PC-9 (cell line): ENCODE measurements at regions of chr9 and their contacts with region 1.

Region 1: GRCh38 chr9:126326228-126327005 is at the start of gene MVB12B:
- DNase-seq: peak in 1 of 2 experiments; percentile 49
- H3K4me3 ChIP-seq: peak within 1 kb of the TSS; percentile 52; the same call in 1 of the 2 replicates
- H3K27ac ChIP-seq: no peak within 1 kb of the TSS
- H3K4me1 ChIP-seq: no peaks in the 10 kb centered on the region
- H3K27me3 ChIP-seq: no peaks in the 10 kb centered on the region
- CTCF ChIP-seq: no peak
- total RNA-seq, gene MVB12B: 6.7 and 8.8 TPM in 2 replicates

Region 2: DNA sequence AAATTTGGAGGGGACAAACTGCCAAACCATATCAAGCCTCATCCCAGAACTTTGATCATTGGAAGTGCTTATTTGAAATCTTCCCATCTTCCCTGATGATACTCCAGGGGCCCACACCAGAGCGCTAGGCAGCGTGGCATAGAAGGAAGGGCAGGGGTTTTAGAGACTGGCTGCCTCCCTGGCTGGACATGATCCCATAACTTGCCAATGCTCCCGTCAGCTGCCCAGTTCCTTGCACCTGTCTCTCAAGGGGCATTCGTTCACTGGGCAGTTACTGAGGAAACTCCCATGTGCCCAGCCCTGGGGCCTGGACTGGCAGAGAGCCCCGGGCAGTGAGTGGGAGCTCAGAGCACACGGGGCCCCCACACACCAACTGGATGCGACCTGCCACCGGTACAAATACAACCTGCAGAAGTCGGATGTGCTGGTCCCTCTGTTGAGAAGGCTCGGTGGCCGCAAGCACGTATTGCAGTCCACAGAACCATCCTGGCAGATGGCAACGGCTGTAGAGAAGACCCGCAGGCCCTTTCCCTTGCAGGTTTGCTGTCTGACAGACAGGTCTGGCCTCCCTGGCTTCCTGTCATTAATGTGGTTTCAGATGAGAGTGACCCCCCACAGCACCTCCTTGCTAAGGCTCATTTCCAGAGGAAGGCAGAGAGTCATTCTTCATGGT is 122.6 kb after region 1 on chr9:
- CTCF ChIA-PET with region 1: no interaction called
- POLR2A ChIA-PET with region 1: interaction called, 19 read pairs
- intact Hi-C with region 1: no loop called
- DNase-seq: no peak
- H3K4me3 ChIP-seq: no peak overlapping the region
- H3K27ac ChIP-seq: no peak overlapping the region
- H3K4me1 ChIP-seq: no peaks in the 10 kb centered on the region
- H3K27me3 ChIP-seq: no peaks in the 10 kb centered on the region
- CTCF ChIP-seq: no peak